Activated CD4-positive, alpha-beta memory T cell treated with anti-CD3 and anti-CD28 coated beads, Interleukin-2, amount 10 ng/mL, durations not matched to agents 7 days and 5 days (primary cell): ENCODE measurements at regions of chr2 and their contacts with region 1.

Region 1: DNA sequence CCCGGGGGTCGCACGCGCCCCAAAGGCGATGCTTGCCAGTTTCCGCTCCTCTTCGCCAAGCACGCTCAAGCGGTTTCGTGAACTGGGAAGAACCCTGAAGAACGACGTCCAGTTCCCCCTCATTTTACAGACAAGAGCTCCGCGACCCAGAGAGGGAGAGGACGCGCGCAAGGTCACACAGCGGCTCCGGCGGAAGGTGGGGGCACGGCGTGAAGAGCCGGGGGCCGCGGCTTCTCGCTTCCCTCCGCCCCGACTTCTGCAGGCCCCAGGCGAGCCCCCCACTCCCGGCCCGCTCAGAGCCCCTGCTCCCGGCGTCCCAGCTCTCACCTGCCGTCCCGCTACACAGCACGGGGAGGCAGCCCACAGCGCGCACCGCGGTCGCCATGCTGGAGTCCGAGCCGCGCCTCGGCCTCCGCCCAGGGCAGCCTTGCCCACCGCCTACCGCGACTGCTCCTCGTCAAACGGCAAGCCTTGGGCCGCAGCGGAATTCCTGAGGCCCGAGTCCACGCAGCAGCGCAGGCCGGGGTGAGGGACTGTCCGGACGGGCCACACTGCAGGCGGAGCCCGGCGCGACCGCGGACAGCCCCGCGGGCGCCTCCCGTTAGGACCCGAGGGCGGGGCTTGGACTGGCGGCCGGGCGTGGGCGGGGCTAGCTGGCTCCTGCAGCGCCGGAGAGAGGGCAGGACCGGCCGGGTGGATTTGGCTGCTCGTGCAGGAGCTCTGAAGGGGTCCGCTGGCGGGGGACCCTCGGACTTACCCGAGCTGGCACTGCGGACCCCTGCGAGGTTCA is at the start of gene MRPS5:
- DNase-seq: peak; percentile 85
- H3K4me3 Mint-ChIP-seq: peak within 1 kb of the TSS; percentile 82
- H3K27ac Mint-ChIP-seq: peak within 1 kb of the TSS; percentile 89
- H3K4me1 Mint-ChIP-seq: peaks cover 42% of the 10 kb centered on the region
- H3K27me3 Mint-ChIP-seq: peaks cover 2% of the 10 kb centered on the region
- total RNA-seq, gene MRPS5: 66.3 to 68.2 TPM

Region 2: DNA sequence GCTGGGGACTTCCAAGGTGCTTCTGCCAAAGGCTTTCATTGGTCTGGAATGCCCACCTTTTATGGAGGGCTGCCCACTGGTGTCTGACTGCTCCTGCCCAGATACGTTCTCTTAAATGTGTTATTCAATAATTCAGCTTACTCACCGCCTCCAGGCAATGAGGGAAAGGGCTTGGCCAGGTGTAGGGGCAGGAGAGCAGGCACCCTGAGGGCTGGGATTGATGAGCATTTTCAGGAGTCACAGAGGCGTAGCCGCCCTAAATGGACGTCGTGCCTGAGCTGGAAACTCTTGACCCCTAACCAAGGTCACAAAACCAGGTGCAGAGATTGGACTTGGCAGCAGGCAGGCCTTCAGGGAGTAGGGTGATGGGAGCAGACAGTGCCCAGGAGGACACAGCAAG is 69.3 kb before region 1 on chr2:
- CTCF ChIA-PET with region 1: no interaction called
- POLR2A ChIA-PET with region 1: no interaction called
- DNase-seq: no peak
- H3K4me3 Mint-ChIP-seq: no peak overlapping the region
- H3K27ac Mint-ChIP-seq: no peak overlapping the region
- H3K4me1 Mint-ChIP-seq: peaks cover 51% of the 10 kb centered on the region
- H3K27me3 Mint-ChIP-seq: no peaks in the 10 kb centered on the region

Region 3: GRCh38 chr2:95138702-95139101 is 17.1 kb after region 1 on chr2:
- CTCF ChIA-PET with region 1: no interaction called
- POLR2A ChIA-PET with region 1: no interaction called
- DNase-seq: no peak
- H3K4me3 Mint-ChIP-seq: no peak overlapping the region
- H3K27ac Mint-ChIP-seq: no peak overlapping the region
- H3K4me1 Mint-ChIP-seq: no peaks in the 10 kb centered on the region
- H3K27me3 Mint-ChIP-seq: no peaks in the 10 kb centered on the region

Region 4: DNA sequence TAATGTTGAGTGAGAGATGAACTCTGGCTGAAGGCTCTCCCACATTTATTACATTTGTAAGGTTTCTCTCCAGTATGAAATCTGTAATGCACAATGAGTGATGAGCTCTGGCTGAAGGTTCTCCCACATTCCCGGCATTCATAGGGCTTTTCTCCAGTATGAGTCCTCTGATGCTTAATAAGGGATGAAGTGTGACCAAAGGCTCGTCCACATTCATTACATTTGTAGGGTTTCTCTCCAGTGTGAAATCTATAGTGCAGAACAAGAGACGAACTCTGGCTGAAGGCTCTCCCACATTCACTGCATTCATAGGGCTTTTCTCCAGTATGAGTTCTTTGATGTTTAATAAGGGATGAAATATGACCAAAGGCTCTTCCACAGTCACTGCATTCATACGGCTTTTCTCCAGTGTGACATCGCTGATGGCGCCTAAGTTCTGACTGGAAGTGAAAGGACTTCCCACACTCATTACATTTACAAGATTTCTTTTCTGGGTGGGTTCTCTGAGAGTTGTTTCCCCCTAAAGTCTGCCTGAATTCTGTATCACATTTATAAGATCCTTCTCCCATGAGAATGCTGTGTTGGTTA is 27.9 kb after region 1 on chr2:
- CTCF ChIA-PET with region 1: no interaction called
- POLR2A ChIA-PET with region 1: no interaction called
- DNase-seq: no peak
- H3K4me3 Mint-ChIP-seq: no peak overlapping the region
- H3K27ac Mint-ChIP-seq: no peak overlapping the region
- H3K4me1 Mint-ChIP-seq: no peaks in the 10 kb centered on the region
- H3K27me3 Mint-ChIP-seq: no peaks in the 10 kb centered on the region

Region 5: GRCh38 chr2:95159690-95160449 is 38.3 kb after region 1 on chr2 and contains the start of gene ZNF514:
- CTCF ChIA-PET with region 1: interaction called, 14 read pairs
- POLR2A ChIA-PET with region 1: interaction called, 41 read pairs
- DNase-seq: peak; percentile 73
- H3K4me3 Mint-ChIP-seq: peak within 1 kb of the TSS; percentile 86
- H3K27ac Mint-ChIP-seq: peak within 1 kb of the TSS; percentile 76
- H3K4me1 Mint-ChIP-seq: peaks cover 23% of the 10 kb centered on the region
- H3K27me3 Mint-ChIP-seq: no peaks in the 10 kb centered on the region
- total RNA-seq, gene ZNF514: 12.9 to 13.4 TPM

Region 6: DNA sequence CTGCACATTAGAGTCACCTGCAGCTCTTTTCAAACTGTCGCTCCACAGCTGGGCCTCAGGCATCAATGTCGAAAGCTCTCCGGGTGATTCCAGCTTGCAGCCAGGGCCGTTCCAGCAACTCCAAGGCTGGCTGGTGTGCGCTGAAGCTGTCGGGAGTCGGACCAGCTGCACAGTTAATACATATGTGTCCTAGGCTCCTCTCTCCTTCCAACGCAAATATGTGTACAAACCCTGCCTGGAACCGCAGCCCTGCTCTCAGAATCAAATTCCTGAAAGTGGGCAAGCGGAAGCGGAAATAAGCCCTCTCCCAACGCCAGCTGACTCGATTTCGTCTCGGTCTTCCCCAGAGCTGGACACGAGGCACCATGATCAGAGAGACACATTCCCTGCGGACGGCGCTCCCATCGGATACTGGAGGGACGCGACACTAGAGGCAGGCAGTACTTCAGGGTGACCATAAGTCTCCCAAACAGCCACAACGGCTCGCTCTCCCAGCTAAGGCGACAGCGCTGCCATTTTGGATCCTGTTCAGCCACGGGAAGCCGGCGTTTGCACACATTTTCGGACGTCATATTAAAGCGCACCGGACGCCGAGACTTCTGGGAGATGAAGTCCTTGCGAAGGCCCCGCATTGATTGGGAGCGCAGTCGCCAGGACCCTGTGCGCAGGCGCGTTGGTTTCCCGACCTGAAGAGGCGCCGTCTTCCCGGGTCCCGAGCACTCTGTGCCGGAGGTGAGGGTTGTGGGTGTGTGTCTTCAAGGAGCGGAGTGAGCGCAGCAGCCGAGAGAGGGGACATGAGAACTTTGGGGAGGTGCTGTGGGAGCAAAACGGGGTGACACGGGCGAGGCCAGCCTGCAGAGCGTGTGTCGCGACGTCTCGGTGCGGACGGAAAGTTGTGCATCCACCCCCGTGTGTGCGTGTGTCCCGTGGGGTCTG is 43.8 kb after region 1 on chr2 and contains the start of gene ZNF2:
- CTCF ChIA-PET with region 1: interaction called, 14 read pairs
- POLR2A ChIA-PET with region 1: interaction called, 41 read pairs
- DNase-seq: peak; percentile 97
- H3K4me3 Mint-ChIP-seq: peak within 1 kb of the TSS; percentile 100
- H3K27ac Mint-ChIP-seq: peak within 1 kb of the TSS; percentile 92
- H3K4me1 Mint-ChIP-seq: peaks cover 32% of the 10 kb centered on the region
- H3K27me3 Mint-ChIP-seq: no peaks in the 10 kb centered on the region
- total RNA-seq, gene ZNF2: 3.5 to 3.9 TPM

Region 7: GRCh38 chr2:95273953-95274853 is 152.6 kb after region 1 on chr2 and contains the start of gene PROM2:
- CTCF ChIA-PET with region 1: no interaction called
- POLR2A ChIA-PET with region 1: no interaction called
- DNase-seq: no peak
- H3K4me3 Mint-ChIP-seq: no peak within 1 kb of the TSS
- H3K27ac Mint-ChIP-seq: no peak within 1 kb of the TSS
- H3K4me1 Mint-ChIP-seq: no peaks in the 10 kb centered on the region
- H3K27me3 Mint-ChIP-seq: no peaks in the 10 kb centered on the region
- total RNA-seq, gene PROM2: 0.15 to 0.18 TPM